Activated CD4-positive, alpha-beta T cell treated with anti-CD3 and anti-CD28 coated beads for 36 hours (primary cell): ENCODE measurements at regions of chr2 and their contacts with region 1.

Region 1: DNA sequence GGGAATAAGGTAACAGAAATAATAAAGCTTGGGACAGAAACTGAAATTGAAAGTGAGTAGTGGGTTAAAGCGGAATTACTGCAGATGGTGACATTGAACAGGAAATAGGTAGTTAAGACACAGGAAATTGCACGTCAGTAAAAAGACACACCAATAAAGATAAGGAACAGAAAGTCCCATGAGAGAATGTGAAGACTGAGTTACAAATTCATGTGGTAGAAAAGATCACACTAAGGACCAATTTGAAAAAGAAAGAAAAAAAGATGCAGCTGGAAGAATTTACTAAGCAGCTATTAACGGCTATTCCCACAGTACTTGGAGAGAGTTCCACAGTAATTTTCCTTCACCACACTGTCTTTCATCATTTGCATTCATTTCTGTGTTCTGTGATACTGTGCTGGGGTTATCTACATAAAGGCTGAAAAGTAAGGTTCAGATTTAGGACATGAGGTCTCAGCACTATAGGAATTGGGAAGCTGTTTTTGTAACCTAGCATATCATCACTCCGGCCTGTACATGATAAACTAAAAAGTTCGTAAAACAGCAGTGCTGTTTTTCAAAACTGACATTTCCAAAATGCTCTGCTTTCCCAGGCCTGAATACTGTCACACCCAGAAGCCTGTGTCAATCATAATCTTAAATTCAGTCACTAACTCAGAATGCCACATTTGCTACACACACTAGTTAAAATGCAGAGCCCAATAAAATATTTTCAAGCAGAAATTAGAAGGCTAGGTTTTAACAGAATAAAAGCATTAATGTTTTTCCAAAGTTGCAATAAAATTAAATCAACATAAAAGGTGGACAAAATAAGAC is 42.9 kb downstream of the SRBD1 start:
- DNase-seq: no peak
- ATAC-seq: peak; percentile 97
- H3K4me3 Mint-ChIP-seq: peak overlapping the region; percentile 60
- H3K27ac Mint-ChIP-seq: peak overlapping the region; percentile 91
- H3K4me1 Mint-ChIP-seq: peaks cover 16% of the 10 kb centered on the region
- H3K27me3 Mint-ChIP-seq: no peaks in the 10 kb centered on the region

Region 2: DNA sequence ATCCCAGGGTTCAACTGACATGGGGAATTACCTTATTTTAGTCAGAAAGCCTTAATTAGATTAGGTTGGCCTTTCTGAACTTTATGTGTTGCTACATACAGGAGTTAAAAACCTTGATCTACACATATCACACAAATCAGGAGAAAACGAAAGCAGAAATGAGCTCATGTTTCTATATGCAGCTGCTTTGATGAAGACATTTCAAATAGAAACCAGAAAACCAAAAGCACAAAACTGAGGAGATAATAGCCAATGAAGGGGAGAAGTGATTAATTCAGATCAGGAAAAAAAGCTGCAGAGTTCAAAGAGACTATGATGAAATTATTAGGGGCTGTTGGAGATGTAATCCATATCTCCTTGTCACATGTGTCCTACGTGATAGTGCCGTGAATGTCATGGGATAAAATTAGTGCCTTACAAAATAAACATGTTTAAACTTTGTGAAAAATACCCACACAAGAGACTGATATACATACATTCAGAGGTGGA is 951.5 kb before region 1 on chr2:
- CTCF ChIA-PET with region 1: no interaction called
- POLR2A ChIA-PET with region 1: no interaction called
- intact Hi-C with region 1: loop called in 1 of 2 experiments (anchors 5 kb)
- DNase-seq: no peak
- ATAC-seq: peak; percentile 96
- H3K4me3 Mint-ChIP-seq: no peak overlapping the region
- H3K27ac Mint-ChIP-seq: no peak overlapping the region
- H3K4me1 Mint-ChIP-seq: peaks cover 13% of the 10 kb centered on the region
- H3K27me3 Mint-ChIP-seq: no peaks in the 10 kb centered on the region

Region 3: DNA sequence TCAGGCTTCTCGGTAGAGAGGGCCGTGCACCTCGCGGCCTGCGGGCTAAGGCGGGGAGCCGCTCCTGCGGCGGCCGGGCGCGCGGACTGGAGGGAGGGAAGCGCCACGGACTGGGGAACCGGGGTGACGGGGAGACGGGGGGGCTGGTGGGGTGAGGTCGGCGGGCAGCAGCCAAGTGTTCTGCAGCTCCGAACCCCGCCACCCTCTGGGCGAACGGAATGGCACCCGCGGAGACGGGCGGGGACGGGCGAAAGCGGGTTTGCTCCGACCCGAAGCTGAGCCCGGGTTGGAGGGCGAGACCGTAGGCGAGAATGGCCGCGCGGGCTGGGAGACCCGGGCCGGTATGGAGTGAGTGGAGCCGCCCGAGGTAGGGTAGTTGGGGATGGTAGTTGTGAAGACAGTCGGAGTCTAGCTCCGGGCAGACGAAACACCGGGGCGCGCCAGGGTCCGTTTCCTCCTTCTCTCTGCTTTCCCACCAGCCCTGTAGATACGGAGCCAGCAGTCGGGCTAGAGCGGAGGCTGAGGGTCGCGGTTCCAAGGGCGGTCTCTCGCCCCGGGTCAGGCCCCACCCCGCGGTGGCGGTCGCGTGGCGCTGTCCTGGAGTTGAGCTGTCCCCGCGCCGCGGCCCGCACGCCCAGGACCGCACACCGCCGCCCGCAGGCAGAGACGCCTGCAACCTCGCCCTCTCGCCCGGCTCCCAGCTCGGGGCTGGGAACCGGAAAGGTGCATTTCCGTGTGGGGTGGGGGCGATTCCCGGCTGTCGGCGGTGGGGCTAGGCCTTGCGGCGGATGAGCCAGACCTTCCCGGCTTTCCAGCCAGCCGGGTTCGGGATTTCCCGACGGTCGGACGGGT is 398.6 kb before region 1 on chr2:
- CTCF ChIA-PET with region 1: no interaction called
- POLR2A ChIA-PET with region 1: no interaction called
- intact Hi-C with region 1: no loop called
- DNase-seq: peak; percentile 21
- ATAC-seq: peak; percentile 26
- H3K4me3 Mint-ChIP-seq: peak overlapping the region; percentile 50
- H3K27ac Mint-ChIP-seq: no peak overlapping the region
- H3K4me1 Mint-ChIP-seq: peaks cover 4% of the 10 kb centered on the region
- H3K27me3 Mint-ChIP-seq: peaks cover 57% of the 10 kb centered on the region

Region 4: DNA sequence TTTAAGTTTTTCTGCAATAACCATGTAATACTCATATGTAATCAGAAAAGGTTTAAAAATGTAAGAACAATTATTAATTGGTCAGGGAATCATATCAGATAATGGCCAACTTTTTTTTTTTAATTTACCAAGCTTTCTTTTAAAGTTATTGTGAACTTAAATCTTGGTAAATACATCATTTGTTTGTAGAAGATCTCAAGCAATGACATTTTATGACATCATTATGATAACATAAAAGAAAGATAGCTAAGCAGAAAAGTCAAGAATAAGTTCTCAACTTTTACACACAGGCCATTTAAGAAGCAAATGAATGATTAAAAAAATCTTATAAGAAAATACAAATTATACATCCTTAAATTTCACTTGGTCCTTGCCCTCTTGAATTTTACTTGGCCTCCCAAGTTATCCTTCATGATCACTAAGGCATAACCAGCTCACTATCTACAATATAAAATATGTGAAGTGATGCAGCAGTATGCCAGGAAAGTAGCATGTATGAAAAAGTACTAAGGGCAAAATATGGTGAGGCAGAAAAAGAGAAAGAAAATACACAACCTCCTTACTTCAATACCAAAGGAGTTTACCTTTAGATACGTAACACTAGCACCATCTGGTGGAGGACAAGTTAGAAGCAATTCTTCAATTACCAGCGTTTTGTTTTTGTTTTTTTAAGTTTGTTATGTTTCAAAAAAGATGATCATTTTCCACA is 73.8 kb before region 1 on chr2:
- CTCF ChIA-PET with region 1: interaction called, 4 read pairs
- POLR2A ChIA-PET with region 1: interaction called, 3 read pairs
- intact Hi-C with region 1: loop called in 1 of 2 experiments (anchors 1 kb)
- DNase-seq: no peak
- ATAC-seq: no peak
- H3K4me3 Mint-ChIP-seq: no peak overlapping the region
- H3K27ac Mint-ChIP-seq: peak overlapping the region; percentile 38
- H3K4me1 Mint-ChIP-seq: peaks cover 36% of the 10 kb centered on the region
- H3K27me3 Mint-ChIP-seq: no peaks in the 10 kb centered on the region

Region 5: GRCh38 chr2:45611020-45611737 is 43.0 kb after region 1 on chr2 and contains the start of gene SRBD1:
- CTCF ChIA-PET with region 1: interaction called, 3 read pairs
- POLR2A ChIA-PET with region 1: interaction called, 3 read pairs
- intact Hi-C with region 1: loop called (anchors 1 kb)
- DNase-seq: peak; percentile 96
- ATAC-seq: peak; percentile 97
- H3K4me3 Mint-ChIP-seq: peak within 1 kb of the TSS; percentile 93
- H3K27ac Mint-ChIP-seq: peak within 1 kb of the TSS; percentile 94
- H3K4me1 Mint-ChIP-seq: peaks cover 19% of the 10 kb centered on the region
- H3K27me3 Mint-ChIP-seq: no peaks in the 10 kb centered on the region
- total RNA-seq, gene SRBD1: 19.2 to 25.0 TPM